GM23248 (cell line): ENCODE measurements at regions of chr3 and their contacts with region 1.

Region 1: DNA sequence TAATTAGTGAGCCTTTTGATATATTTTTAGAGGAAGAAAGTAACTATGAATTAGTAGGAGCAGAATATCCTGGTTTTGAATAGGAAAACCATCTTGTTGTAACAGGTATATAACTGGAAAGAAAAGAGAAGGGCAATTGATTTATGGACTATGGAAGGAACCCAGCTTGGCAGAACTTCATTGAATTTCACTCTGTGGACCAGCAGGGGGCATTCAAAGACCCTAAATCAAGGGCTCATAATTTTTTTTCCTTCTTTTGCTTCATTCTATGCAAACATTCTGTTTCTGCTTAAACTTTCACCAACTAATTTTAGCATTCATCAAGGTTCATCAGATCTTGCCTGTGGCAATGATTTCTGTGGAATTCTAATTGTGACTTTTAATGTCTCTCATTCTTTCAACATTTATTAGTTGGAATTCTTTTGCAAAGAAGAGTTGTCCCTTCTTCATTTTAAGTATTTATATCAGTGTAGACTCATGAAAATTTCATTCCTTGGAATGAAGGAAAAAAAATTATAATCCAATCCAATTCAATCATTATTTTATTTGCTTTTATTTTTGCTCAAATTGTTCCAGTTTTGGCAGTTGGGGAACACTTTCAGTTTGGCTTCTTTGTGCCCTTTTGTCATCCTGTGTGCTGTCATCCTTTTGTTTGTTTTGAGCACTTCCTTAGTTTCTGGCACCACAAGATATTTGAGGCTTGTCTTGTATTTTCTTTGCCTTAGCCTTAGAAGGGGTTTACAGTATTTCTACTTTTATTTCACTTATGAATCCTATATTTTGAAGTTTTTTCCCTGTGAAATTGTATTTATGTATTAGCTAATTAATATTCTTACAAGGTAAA is 30.4 kb downstream of the NXPE3 start:
- DNase-seq: peak; percentile 66
- H3K4me3 ChIP-seq: no peak overlapping the region
- H3K27ac ChIP-seq: no peak overlapping the region
- H3K4me1 ChIP-seq: peaks cover 20% of the 10 kb centered on the region
- H3K27me3 ChIP-seq: no peaks in the 10 kb centered on the region

Region 2: GRCh38 chr3:101391413-101391950 is 417.9 kb before region 1 on chr3:
- in situ Hi-C with region 1: no loop called
- DNase-seq: no peak
- H3K4me3 ChIP-seq: no peak overlapping the region
- H3K27ac ChIP-seq: no peak overlapping the region
- H3K4me1 ChIP-seq: no peaks in the 10 kb centered on the region
- H3K27me3 ChIP-seq: no peaks in the 10 kb centered on the region

Region 3: GRCh38 chr3:101963902-101964362 is 154.5 kb after region 1 on chr3:
- in situ Hi-C with region 1: no loop called
- DNase-seq: peak; percentile 86
- H3K4me3 ChIP-seq: no peak overlapping the region
- H3K27ac ChIP-seq: peak overlapping the region; percentile 34
- H3K4me1 ChIP-seq: peaks cover 22% of the 10 kb centered on the region
- H3K27me3 ChIP-seq: no peaks in the 10 kb centered on the region

Region 4: GRCh38 chr3:102078854-102079253 is 269.5 kb after region 1 on chr3:
- in situ Hi-C with region 1: no loop called
- DNase-seq: no peak
- H3K4me3 ChIP-seq: no peak overlapping the region
- H3K27ac ChIP-seq: no peak overlapping the region
- H3K4me1 ChIP-seq: peaks cover 4% of the 10 kb centered on the region; the same call in 1 of the 2 replicates
- H3K27me3 ChIP-seq: no peaks in the 10 kb centered on the region

Region 5: GRCh38 chr3:102224128-102224527 is 414.7 kb after region 1 on chr3:
- in situ Hi-C with region 1: loop called (anchors 5 kb)
- DNase-seq: peak; percentile 39
- H3K4me3 ChIP-seq: no peak overlapping the region
- H3K27ac ChIP-seq: no peak overlapping the region
- H3K4me1 ChIP-seq: no peaks in the 10 kb centered on the region
- H3K27me3 ChIP-seq: no peaks in the 10 kb centered on the region